ENCODE measurements at regions of chr1 and their contacts with region 1.

Region 1: DNA sequence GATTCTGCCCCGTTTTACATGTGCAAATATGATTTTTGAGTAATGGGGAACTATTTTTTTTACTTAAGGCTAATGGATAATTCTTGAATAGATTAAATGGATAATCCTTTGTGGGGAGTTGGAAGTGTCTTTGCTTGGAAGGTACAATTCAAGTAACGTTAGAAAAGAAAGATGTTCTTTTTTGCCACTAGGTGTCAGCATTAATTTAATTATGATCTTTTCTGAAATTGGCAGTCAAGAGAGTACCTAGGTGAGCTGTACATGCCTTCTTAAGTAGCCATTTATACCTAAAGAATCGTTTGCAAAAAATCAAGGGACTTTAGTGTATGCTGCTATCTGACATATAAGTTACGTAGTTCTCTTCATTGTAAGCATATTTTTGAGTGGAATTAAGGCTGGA is 2.2 kb downstream of the FBXO28 start:
- DNase-seq: no peak
- ATAC-seq: peak in 1 of 2 donors; percentile 50
- H3K4me3 ChIP-seq: no peak overlapping the region
- H3K27ac ChIP-seq: no peak overlapping the region
- H3K4me1 ChIP-seq: peaks cover 22% of the 10 kb centered on the region
- H3K27me3 ChIP-seq: no peaks in the 10 kb centered on the region
- CTCF ChIP-seq: peak; percentile 52

Region 2: DNA sequence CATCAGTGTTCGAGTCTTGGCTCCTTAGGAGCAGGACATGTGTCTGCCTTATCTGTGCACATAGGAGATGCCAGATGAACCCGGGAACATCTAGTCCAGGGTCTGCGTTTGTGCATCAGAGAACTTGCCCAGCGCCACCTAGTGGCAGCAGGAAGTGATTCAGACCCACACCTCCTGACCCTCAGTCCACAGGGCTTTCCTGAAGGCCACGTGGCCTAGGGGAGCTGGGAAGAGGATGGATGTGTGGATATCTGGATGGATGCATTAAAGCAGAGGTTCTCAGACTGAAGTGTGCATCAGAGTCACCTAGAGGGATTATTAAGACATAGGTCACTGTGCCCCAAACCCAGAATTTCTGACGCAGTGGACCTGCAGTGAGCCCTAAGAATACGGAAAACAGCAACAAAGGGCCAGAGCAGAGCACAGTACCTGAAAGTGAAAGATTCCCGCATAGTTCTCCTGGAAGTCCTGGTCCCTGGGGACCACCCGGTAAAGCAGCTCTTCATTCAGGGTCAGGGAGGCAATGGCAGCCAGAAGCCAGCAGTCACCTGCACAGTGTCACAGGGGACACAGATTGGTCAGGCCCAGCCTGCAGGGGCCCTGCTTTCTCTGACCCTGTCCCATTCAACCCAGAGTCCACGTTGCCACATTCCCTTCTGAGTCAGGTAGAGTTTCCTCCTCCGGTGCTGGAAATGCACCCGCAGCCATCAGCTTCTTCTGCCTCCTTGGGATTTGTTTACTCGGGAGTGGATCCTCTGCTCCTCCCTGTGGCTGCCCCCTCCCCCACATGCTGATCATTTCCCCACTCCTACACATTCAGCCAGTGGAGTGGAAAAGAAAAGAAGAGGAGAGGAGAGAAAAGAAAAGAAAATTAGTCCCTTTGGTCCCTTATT is 487.7 kb before region 1 on chr1:
- intact Hi-C with region 1: no loop called
- DNase-seq: peak; percentile 61
- ATAC-seq: peak; percentile 50 to 72
- H3K4me3 ChIP-seq: no peak overlapping the region
- H3K27ac ChIP-seq: no peak overlapping the region
- H3K4me1 ChIP-seq: no peaks in the 10 kb centered on the region
- H3K27me3 ChIP-seq: no peaks in the 10 kb centered on the region
- CTCF ChIP-seq: peak; percentile 61

Region 3: GRCh38 chr1:224329842-224330753 is 214.0 kb after region 1 on chr1 and contains the start of gene NVL:
- intact Hi-C with region 1: loop called (anchors 5 kb)
- DNase-seq: peak; percentile 88
- ATAC-seq: peak; percentile 95 to 98
- H3K4me3 ChIP-seq: peak within 1 kb of the TSS; percentile 91
- H3K27ac ChIP-seq: peak within 1 kb of the TSS; percentile 96
- H3K4me1 ChIP-seq: peaks cover 29% of the 10 kb centered on the region
- H3K27me3 ChIP-seq: no peaks in the 10 kb centered on the region
- CTCF ChIP-seq: no peak
- total RNA-seq, gene NVL: 30.4 TPM